ENCODE measurements at regions of chr19 and their contacts with region 1.

Region 1: GRCh38 chr19:18007044-18007916 is 690 bp upstream of the ARRDC2 start:
- DNase-seq: peak; percentile 79
- H3K27ac ChIP-seq: peak overlapping the region; percentile 78
- CTCF ChIP-seq: peak; percentile 99

Region 2: DNA sequence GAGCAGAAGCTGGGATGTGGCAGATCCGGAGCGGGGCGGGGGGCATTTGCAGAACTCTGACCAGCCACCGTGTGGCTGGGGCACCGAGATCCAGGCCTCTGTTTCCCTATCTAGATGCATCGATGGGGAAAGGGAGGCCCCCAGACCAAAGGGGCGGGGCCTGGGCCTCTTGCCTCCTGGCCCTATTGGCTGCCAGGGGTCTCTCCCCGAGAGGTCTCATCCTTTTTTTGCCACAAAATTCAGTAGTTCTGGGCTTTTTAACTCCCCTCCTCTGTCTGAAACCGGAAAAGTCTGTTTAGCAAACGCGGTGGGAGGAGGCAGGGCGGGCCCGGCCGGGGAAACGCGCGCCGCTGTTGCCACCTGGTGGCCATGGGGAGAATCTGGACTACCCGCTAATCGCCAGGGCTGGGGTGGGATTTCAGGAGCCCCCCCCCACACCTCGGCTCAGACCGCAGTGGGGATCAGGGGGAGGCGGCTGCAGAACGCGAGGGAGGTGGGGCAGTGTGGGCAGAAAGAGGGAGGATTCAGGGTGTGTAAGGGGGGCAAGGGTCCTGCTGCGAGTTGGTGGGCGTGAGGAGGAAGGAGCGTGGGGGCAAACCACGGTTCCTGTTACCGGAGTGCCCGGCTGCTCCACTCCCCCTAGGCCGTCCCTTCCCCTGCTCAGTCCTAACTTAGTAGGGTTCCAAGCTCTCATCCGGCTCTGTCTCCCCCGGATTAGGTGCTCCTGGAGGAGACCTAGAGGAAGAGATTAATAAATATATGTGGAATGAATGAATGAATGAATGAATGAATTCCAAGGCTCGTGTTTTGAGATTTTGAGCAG is 51.1 kb after region 1 on chr19:
- CTCF ChIA-PET with region 1: interaction called, 13 read pairs
- POLR2A ChIA-PET with region 1: interaction called, 3 read pairs
- DNase-seq: peak; percentile 79
- H3K27ac ChIP-seq: peak overlapping the region; percentile 72
- CTCF ChIP-seq: peak; percentile 95

Region 3: DNA sequence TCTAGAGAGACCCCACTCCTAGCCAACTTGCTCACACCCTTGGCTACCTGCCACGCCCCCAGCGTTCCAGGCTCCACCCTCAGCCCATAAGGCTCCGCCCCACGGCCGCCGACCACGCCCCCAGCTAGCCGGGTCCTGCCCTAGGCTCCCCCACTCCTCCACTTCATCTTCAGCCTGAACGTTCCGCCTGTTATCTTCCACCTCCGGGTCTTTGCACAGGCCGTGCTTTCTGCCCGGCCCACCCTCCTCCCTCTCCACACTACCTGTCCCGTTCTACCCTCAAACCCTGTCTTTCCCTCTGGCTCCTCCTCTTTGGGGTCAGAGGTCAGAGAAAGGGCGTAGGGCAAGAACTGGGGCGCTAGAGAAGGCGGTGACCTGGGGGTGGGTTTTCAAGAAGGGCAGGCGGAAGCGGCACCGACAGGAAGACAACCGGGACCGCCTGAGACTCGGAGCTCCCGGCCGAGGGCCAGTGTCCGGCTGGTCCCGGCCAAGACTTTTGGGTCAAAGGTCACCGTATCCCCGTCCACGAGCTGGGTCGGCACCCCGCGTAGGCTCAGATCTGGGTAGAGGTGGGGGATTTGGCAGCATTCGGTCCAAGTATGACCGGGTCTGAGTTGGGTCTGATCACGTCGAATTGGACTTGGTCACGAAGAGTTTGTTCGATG is 216.7 kb after region 1 on chr19:
- CTCF ChIA-PET with region 1: no interaction called
- POLR2A ChIA-PET with region 1: no interaction called
- DNase-seq: peak; percentile 55
- H3K27ac ChIP-seq: peak overlapping the region; percentile 60
- CTCF ChIP-seq: no peak